ENCODE measurements at regions of chr2 and their contacts with region 1.

Region 1: GRCh38 chr2:144471305-144472045 is 48.4 kb downstream of the ZEB2 start:
- DNase-seq: peak in 1 of 2 donors; percentile 70
- ATAC-seq: peak; percentile 61 to 66 (median 64)
- H3K4me3 ChIP-seq: no peak overlapping the region
- H3K4me3 Mint-ChIP-seq: no peak overlapping the region
- H3K27ac ChIP-seq: peak overlapping the region; percentile 35
- H3K27ac Mint-ChIP-seq: no peak overlapping the region
- H3K4me1 ChIP-seq: peaks cover 26% of the 10 kb centered on the region
- H3K4me1 Mint-ChIP-seq: peaks cover 39 to 51% of the 10 kb centered on the region in 2 donors
- H3K27me3 ChIP-seq: no peaks in the 10 kb centered on the region
- H3K27me3 Mint-ChIP-seq: no peaks in the 10 kb centered on the region
- CTCF ChIP-seq: no peak

Region 2: GRCh38 chr2:144449028-144449406 is 22.5 kb before region 1 on chr2:
- intact Hi-C with region 1: no loop called
- DNase-seq: peak in 1 of 2 donors; percentile 52
- ATAC-seq: peak; percentile 21 to 63 (median 36)
- H3K4me3 ChIP-seq: no peak overlapping the region
- H3K4me3 Mint-ChIP-seq: peak overlapping the region; percentile 65
- H3K27ac ChIP-seq: peak overlapping the region; percentile 70
- H3K27ac Mint-ChIP-seq: peak overlapping the region in 1 of 2 donors; percentile 86
- H3K4me1 ChIP-seq: peaks cover 27% of the 10 kb centered on the region
- H3K4me1 Mint-ChIP-seq: peaks cover 90 to 91% of the 10 kb centered on the region in 2 donors
- H3K27me3 ChIP-seq: no peaks in the 10 kb centered on the region
- H3K27me3 Mint-ChIP-seq: no peaks in the 10 kb centered on the region
- CTCF ChIP-seq: no peak

Region 3: DNA sequence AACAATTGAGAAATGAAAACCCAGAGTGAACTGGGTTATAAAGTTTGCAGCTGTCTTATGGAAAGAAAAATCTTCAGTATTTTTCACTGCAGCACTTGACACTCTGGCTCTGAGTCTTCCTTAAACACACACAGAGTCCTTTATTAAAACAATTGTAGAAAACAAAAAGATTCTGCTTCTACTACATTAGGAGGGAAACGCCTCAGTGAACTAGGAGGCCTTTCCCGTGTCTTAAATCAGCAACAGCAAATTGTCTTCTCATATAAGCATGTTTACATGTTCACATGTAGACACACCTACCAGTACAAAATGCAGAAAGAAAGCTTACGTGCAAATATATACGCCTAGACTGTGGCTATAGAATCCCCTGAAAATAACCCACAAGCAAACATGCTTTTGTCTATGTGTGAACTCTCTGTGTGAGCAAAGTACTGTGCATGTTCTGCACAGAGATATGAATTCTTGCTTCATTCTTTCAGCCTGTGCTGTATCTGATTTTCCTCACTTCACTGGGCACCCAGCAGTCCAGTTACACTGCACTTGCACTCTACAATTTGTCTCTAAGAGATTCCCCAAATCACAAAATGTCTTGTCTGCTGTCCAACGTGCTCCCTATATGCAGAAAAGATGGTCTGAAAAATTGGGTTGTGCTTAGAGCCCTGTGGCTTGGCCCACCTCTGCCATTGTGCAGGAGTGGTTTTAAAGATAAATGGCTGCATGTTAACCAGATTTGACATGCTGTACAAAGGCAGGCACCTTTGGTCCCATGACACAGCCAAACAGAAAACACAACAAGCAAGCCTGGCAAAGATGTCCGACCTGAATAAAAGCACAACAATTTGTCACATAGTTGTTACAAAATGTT is 24.0 kb after region 1 on chr2:
- intact Hi-C with region 1: loop called (anchors 2 kb)
- DNase-seq: no peak
- ATAC-seq: peak; percentile 57 to 76 (median 69)
- H3K4me3 ChIP-seq: no peak overlapping the region
- H3K4me3 Mint-ChIP-seq: peak overlapping the region; percentile 75
- H3K27ac ChIP-seq: peak overlapping the region; percentile 37
- H3K27ac Mint-ChIP-seq: peak overlapping the region; percentile 82 to 89
- H3K4me1 ChIP-seq: peaks cover 31% of the 10 kb centered on the region
- H3K4me1 Mint-ChIP-seq: peaks cover 79 to 85% of the 10 kb centered on the region in 2 donors
- H3K27me3 ChIP-seq: no peaks in the 10 kb centered on the region
- H3K27me3 Mint-ChIP-seq: no peaks in the 10 kb centered on the region
- CTCF ChIP-seq: no peak

Region 4: DNA sequence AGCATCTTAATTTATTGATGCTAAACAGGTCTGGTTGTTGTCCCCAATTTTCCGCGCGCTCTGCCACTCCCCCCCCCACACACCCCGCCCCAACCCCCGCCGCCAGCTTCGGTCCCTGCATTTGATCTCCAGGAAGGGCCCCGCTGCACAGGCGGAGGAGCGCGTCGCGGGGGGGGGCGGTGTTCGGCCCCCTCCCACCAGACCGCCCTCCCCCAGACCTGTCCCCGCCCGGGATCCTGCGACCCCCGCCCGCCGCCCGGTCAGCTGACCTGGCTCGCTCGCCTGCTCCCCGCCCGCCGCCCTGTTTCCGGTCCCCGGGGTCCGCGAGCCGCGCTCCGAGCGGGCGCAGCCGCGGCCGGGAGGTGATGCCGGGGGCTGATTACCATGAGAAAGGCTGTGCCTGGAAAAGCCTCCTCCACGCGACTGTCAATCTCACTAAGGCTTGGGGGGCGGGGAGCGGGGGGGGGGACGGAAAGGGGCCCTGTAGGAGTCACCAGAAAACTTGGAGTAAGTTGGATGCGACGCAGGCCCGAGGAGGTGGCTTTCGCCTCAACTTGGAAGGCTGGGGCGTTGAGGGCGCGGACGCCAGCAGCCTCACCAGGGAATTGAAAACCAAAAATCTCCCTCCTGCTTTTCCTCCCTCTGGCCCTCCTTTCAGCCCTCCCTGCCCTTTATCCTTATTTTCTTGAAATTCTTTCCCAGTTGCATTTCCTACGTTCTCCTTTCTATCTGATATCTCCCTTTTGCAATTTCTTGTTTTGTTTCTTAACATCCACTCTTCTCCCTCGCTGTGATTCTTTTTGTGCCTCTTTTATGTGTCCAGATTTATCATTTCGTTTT is 52.9 kb after region 1 on chr2:
- intact Hi-C with region 1: no loop called
- DNase-seq: peak; percentile 51 to 59
- ATAC-seq: peak; percentile 45 to 56 (median 47)
- H3K4me3 ChIP-seq: peak overlapping the region; percentile 46
- H3K4me3 Mint-ChIP-seq: peak overlapping the region; percentile 93
- H3K27ac ChIP-seq: peak overlapping the region; percentile 46
- H3K27ac Mint-ChIP-seq: peak overlapping the region; percentile 85 to 87
- H3K4me1 ChIP-seq: peaks cover 19% of the 10 kb centered on the region
- H3K4me1 Mint-ChIP-seq: peaks cover 24% of the 10 kb centered on the region in 2 donors
- H3K27me3 ChIP-seq: no peaks in the 10 kb centered on the region
- H3K27me3 Mint-ChIP-seq: no peaks in the 10 kb centered on the region
- CTCF ChIP-seq: no peak

Measured in natural killer cell (primary cell).